Activated CD4-positive, alpha-beta memory T cell treated with anti-CD3 and anti-CD28 coated beads for 36 hours (primary cell): ENCODE measurements at regions of chr11 and their contacts with region 1.

Region 1: GRCh38 chr11:62694455-62695167 is 5.3 kb upstream of the LRRN4CL start:
- DNase-seq: peak; percentile 81
- H3K4me3 Mint-ChIP-seq: no peak overlapping the region
- H3K27ac Mint-ChIP-seq: no peak overlapping the region
- H3K4me1 Mint-ChIP-seq: peaks cover 5% of the 10 kb centered on the region
- H3K27me3 Mint-ChIP-seq: no peaks in the 10 kb centered on the region

Region 2: DNA sequence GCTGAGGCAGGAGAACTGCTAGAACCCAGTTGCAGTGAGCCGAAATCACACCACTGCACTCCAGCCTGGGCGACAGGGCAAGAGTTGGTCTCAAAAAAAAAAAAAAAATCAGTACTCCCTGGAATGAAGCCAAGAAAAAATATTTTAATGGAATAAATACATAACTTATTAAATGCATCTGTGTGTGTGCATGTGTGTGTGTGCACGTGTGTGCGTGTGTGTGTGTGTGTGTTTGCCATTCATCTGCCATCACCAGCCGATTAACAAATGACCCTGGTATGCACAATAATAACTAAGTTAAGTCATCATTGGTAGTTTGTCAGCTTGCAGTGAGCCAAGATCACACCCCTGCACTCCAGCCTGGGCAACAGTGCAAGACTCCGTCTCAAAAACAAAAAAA is 310.8 kb before region 1 on chr11:
- CTCF ChIA-PET with region 1: interaction called, 3 read pairs
- POLR2A ChIA-PET with region 1: no interaction called
- intact Hi-C with region 1: loop called (anchors 2 kb)
- DNase-seq: no peak
- H3K4me3 Mint-ChIP-seq: no peak overlapping the region
- H3K27ac Mint-ChIP-seq: no peak overlapping the region
- H3K4me1 Mint-ChIP-seq: peaks cover 11% of the 10 kb centered on the region
- H3K27me3 Mint-ChIP-seq: no peaks in the 10 kb centered on the region

Region 3: DNA sequence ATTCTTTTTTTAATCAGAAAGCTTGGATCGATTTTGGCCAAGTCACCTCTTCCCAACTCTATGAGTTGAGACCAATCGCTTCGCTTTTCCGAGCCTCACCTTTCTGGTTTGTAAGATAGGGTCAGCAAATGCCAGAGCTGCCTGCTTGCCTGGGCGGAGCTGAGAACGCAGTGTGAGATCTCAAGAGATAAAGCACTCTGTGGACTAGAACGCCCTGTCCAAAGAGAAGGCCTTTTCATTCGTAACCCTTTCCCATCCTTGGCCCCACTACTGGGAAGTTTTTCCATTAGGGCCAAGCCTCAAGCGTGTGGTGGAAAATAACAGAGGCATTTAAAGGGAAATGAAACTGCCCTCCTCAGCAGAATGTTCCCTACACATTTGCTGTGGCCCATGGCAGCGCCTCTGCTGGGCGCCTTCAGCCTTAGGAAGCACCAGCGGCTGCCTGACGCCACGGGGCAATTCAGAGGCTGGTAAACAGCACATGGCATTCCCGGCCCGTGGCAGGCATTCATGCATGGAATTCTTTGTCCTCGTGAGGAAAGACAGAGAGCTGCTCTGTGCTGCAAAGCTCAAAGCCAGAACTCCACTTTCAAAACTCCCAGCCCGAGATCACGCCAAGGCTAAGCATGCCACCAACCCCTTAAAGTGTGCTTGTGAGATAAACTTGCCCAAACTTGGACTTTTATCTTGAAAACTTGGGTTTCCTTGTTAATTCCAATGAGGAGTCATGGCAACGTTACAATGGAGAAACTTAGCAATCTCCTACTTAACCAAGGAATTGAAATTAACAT is 186.1 kb before region 1 on chr11:
- CTCF ChIA-PET with region 1: no interaction called
- POLR2A ChIA-PET with region 1: no interaction called
- intact Hi-C with region 1: no loop called
- DNase-seq: no peak
- H3K4me3 Mint-ChIP-seq: no peak overlapping the region
- H3K27ac Mint-ChIP-seq: no peak overlapping the region
- H3K4me1 Mint-ChIP-seq: peaks cover 4% of the 10 kb centered on the region
- H3K27me3 Mint-ChIP-seq: no peaks in the 10 kb centered on the region

Region 4: DNA sequence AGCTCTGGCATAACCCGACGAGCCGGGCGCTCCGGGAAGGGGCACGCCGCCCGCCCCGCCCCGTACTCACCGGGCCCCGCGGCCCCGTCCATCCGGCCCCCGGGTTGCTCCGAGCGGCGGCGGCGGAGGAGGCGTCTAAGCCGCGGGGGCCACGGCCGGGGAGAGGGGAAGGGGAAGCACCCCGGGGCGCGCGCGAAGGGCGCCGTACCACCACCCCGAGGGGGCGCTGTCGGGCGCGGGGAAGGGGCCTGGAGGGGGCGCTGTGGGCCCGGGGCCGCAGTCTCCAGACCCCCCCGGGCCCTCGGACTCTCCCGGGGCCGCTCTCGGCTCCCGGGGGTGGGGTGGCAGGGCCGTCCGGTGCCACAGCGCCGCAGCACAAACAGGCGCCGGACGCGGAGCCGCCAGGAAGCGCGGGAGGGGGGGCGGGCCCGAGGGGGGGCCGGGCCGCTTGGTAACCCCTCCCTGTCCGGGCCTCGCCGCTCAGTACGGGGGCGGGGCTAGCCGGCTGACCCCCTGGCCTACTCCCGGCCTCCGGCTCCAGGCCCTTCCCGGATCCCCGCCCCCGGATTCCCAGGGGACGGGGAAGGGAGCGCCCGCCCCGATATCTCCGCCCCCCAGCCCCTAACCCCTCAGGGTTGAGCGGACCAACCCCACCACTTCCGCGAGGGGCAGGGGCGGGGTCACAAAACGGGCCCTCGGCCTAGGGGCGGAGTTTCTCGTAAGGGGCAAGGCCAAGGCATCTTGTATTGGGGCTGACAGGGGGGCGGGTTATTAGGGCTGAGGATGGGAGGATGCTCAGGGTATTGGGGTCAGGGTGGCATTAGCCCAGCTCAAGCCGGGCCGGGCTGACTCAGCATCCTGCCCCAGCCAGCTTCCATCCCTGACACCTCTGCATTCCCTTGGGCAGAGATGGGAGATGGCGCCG is 82.0 kb before region 1 on chr11 and contains the starts of genes EML3 and ROM1:
- CTCF ChIA-PET with region 1: interaction called, 9 read pairs
- POLR2A ChIA-PET with region 1: no interaction called
- intact Hi-C with region 1: loop called (anchors 5 kb)
- DNase-seq: peak; percentile 90
- H3K4me3 Mint-ChIP-seq: peak within 1 kb of the TSS; percentile 90
- H3K27ac Mint-ChIP-seq: peak within 1 kb of the TSS; percentile 95
- H3K4me1 Mint-ChIP-seq: peaks cover 45% of the 10 kb centered on the region
- H3K27me3 Mint-ChIP-seq: no peaks in the 10 kb centered on the region
- total RNA-seq, gene EML3: 113 to 116 TPM
- total RNA-seq, gene ROM1: 1.1 to 1.5 TPM

Region 5: GRCh38 chr11:62678770-62679696 is 15.6 kb before region 1 on chr11 and contains the start of gene UBXN1:
- CTCF ChIA-PET with region 1: interaction called, 32 read pairs
- POLR2A ChIA-PET with region 1: no interaction called
- intact Hi-C with region 1: no loop called
- DNase-seq: peak; percentile 94
- H3K4me3 Mint-ChIP-seq: peak within 1 kb of the TSS; percentile 86
- H3K27ac Mint-ChIP-seq: peak within 1 kb of the TSS; percentile 90
- H3K4me1 Mint-ChIP-seq: peaks cover 35% of the 10 kb centered on the region
- H3K27me3 Mint-ChIP-seq: no peaks in the 10 kb centered on the region
- total RNA-seq, gene UBXN1: 110 to 116 TPM